HEK293 (cell line): ENCODE measurements at regions of chr14 and their contacts with region 1.

Region 1: GRCh38 chr14:74249433-74250375 is 10.5 kb downstream of the VSX2 start:
- H3K4me3 ChIP-seq: no peak overlapping the region
- H3K27ac ChIP-seq: no peak overlapping the region
- H3K4me1 ChIP-seq: no peaks in the 10 kb centered on the region
- CTCF ChIP-seq: no peak

Region 2: DNA sequence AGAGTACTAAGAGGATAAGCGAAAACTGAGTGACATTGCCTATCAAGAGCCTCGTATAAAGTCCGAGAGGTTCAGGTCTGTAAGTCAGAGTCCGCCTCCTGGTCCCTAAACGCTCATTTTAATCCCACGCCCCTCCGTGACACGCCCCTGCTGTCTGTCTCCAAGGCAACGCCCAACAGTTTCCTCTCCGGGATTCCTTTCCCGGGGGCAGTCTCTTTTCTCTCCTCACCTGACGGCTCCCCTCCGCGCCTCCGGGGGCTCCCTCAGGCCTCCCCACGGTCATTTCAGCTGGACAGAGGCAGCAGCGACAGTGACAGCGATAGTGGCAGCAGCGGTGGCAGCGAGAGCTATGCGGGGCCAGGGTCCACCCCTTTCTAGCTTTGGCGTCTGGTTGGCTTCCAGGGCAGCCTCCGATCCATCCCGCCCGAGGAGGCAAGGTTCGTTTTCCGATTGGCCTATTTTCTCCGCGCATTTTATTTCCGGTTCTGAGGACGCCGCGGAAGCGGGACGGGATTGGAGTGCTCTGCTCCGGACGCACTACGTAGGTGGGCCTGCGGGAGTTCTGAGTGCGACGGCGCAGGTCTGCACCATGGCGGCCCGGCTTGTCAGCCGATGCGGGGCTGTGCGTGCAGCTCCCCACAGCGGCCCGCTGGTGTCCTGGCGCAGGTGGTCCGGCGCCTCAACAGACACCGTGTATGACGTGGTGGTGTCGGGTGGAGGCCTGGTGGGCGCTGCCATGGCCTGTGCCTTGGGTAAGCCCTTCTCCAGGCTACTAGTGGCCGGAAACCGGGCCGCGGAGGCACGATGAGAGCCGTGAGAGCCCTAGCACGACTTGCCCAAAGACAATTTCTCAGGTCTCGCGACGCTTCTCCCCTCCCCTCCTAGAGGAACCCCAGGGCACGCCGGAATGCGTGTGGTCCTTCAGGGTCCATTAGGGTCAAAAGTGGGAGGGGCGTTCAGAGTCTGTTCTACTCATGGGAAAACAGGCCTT is 299.7 kb before region 1 on chr14 and contains the starts of genes COQ6 and FAM161B:
- CTCF ChIA-PET with region 1: no interaction called
- POLR2A ChIA-PET with region 1: no interaction called
- H3K4me3 ChIP-seq: peak within 1 kb of the TSS; percentile 88
- H3K27ac ChIP-seq: peak within 1 kb of the TSS; percentile 74
- H3K4me1 ChIP-seq: no peaks in the 10 kb centered on the region
- CTCF ChIP-seq: peak; percentile 54; the same call in 1 of the 2 replicates

Region 3: DNA sequence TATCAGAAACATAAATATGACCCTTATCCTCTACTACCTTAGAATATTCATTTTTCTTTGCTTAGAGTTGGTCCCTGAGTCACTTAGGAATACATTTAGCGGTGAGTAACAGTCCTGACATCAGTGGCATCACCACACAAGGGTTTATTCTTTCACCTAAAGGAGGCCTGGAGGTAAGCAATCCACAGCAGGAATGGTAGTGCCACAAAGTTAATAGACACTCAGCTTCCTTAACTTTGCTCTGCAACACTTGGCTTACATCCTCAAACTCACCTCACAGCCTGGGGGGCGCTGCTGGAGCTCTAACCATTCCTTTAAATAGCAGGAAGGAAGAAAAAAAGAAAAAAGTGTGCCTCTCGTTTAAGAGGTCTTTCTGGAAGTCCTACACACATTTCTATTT is 201.4 kb before region 1 on chr14:
- CTCF ChIA-PET with region 1: no interaction called
- POLR2A ChIA-PET with region 1: no interaction called
- H3K4me3 ChIP-seq: no peak overlapping the region
- H3K27ac ChIP-seq: no peak overlapping the region
- H3K4me1 ChIP-seq: no peaks in the 10 kb centered on the region
- CTCF ChIP-seq: no peak

Region 4: DNA sequence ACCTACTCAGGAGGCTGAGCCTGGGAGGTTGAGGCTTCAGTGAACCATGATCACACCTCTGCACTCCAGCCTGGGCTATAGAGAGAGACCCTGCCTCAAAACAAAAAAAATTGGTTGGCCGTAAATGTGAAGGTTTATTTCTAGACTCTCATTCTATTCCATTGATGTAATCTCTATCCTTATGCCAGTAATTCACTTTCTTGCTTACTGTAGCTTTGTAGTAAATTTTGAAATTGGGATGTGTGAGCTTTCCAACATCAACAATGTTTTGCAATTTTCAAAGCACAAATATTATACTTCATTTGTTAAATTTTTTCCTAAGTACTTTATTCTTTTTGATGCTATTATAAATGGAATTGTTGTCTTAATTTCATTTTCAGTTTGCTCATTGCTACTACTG is 140.3 kb before region 1 on chr14:
- CTCF ChIA-PET with region 1: interaction called, 71 read pairs
- POLR2A ChIA-PET with region 1: no interaction called
- H3K4me3 ChIP-seq: no peak overlapping the region
- H3K27ac ChIP-seq: no peak overlapping the region
- H3K4me1 ChIP-seq: no peaks in the 10 kb centered on the region
- CTCF ChIP-seq: no peak

Region 5: DNA sequence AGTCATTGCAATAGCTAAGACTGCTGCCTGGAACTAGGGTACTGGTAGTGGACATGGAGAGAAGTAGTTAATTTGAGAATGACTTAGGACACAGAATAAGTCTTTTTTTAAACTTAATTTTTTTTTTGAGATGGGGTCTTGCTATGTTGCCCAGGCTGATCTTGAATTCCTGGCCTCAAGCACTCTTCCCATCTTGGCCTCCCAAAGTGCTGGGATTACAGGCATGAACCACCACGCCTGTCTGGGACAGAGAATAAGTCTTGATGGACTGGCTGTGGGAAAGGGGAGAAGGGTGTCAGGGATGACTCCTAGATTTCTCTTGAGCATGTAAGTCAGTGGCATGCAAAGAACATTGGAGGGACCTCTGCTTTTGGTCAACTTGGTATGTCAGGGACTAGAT is 122.1 kb before region 1 on chr14:
- CTCF ChIA-PET with region 1: interaction called, 10 read pairs
- POLR2A ChIA-PET with region 1: no interaction called
- H3K4me3 ChIP-seq: no peak overlapping the region
- H3K27ac ChIP-seq: no peak overlapping the region
- H3K4me1 ChIP-seq: no peaks in the 10 kb centered on the region
- CTCF ChIP-seq: no peak

Region 6: GRCh38 chr14:74217672-74218448 is 31.8 kb before region 1 on chr14:
- CTCF ChIA-PET with region 1: interaction called, 17 read pairs
- POLR2A ChIA-PET with region 1: no interaction called
- H3K4me3 ChIP-seq: no peak overlapping the region
- H3K27ac ChIP-seq: no peak overlapping the region
- H3K4me1 ChIP-seq: no peaks in the 10 kb centered on the region
- CTCF ChIP-seq: peak; percentile 80

Region 7: DNA sequence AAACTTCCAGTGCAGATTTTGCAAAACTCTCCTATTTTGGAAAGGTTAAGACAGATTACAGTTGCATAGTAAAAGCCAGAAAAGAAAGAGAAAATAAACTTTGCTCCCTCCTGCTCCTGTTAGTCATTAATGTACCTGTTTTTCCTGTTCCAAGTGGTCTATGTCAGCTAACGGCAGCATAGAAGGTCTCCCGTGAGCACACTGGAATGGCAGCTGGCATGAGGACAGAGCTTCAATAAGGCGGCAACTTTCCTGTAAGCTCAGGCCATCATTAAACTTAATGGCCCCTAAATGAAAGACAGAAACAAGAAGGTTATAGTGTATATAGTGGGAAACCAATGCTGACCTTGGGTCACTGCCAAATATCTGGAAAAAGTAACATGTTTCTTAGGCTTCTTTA is 769.0 kb after region 1 on chr14:
- CTCF ChIA-PET with region 1: no interaction called
- POLR2A ChIA-PET with region 1: no interaction called
- H3K4me3 ChIP-seq: no peak overlapping the region
- H3K27ac ChIP-seq: no peak overlapping the region
- H3K4me1 ChIP-seq: no peaks in the 10 kb centered on the region
- CTCF ChIP-seq: no peak